CD4-positive, alpha-beta memory T cell (primary cell): ENCODE measurements at regions of chr7 and their contacts with region 1.

Region 1: GRCh38 chr7:106041140-106041717 is 70.9 kb downstream of the SYPL1 start:
- DNase-seq: peak in 2 of 5 donors; percentile 19 to 30
- H3K4me3 ChIP-seq: no peak overlapping the region
- H3K4me3 Mint-ChIP-seq: peak overlapping the region in 2 of 8 donors; percentile 6 to 59
- H3K27ac ChIP-seq: no peak overlapping the region
- H3K27ac Mint-ChIP-seq: peak overlapping the region in 4 of 7 donors; percentile 0 to 74 (median 30)
- H3K4me1 ChIP-seq: peaks cover 26% of the 10 kb centered on the region
- H3K4me1 Mint-ChIP-seq: peaks cover 15 to 32% (median 25%) of the 10 kb centered on the region in 4 donors
- H3K27me3 ChIP-seq: no peaks in the 10 kb centered on the region
- H3K27me3 Mint-ChIP-seq: peaks cover 2 to 6% of the 10 kb centered on the region in 2 donors

Region 2: GRCh38 chr7:105934572-105935185 is 106.5 kb before region 1 on chr7:
- CTCF ChIA-PET with region 1: no interaction called
- POLR2A ChIA-PET with region 1: no interaction called
- intact Hi-C with region 1: loop called (anchors 1 kb)
- DNase-seq: no peak
- H3K4me3 ChIP-seq: no peak overlapping the region
- H3K4me3 Mint-ChIP-seq: no peak overlapping the region
- H3K27ac ChIP-seq: no peak overlapping the region
- H3K27ac Mint-ChIP-seq: no peak overlapping the region
- H3K4me1 ChIP-seq: no peaks in the 10 kb centered on the region
- H3K4me1 Mint-ChIP-seq: peaks cover 0 to 8% (median 6%) of the 10 kb centered on the region in 4 donors
- H3K27me3 ChIP-seq: no peaks in the 10 kb centered on the region
- H3K27me3 Mint-ChIP-seq: no peaks in the 10 kb centered on the region

Region 3: DNA sequence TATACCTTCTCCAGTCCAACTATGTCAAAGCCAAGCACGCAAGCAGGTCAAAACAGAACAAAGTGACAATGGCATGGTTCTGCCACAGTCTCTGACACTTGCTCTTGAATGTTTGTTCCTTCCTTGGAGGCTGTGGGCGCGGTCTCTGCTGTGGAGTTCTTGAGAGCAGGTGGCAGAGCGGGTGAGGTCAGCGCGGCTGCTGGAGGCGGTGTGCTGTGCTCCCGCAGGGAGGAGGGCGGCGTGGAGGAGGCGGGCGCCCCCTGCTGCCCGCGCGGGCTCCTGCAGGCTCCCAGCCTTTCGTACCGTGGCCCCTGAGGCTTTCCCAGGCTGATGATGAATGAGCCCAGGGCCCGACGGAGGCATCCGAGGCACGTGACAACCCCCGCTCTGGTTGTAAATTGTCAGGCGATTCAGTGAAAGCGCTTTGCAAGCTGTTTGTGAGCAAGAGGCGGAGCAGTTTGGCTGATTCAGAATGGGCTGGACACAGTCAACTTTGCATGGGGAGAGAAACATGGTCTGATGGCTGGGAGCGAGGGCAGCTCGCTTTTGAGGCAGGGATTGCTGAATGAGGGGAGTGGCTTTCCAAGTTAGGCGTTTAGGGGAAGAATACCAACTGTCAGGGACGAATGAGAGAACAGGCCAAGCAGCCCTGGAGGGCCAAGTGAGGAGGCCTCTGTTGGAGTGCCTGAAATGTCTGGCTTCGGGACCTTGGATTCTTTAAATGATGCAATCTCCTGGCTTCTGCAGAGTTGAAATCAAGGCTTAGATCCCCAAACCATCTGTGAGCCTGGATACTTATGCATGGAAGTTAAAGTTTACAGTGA is 31.6 kb before region 1 on chr7:
- CTCF ChIA-PET with region 1: interaction called, 16 read pairs
- POLR2A ChIA-PET with region 1: no interaction called
- intact Hi-C with region 1: loop called (anchors 1 kb)
- DNase-seq: peak; percentile 77 to 83 (median 78)
- H3K4me3 ChIP-seq: no peak overlapping the region
- H3K4me3 Mint-ChIP-seq: peak overlapping the region in 4 of 8 donors; percentile 34 to 64 (median 48)
- H3K27ac ChIP-seq: no peak overlapping the region
- H3K27ac Mint-ChIP-seq: peak overlapping the region in 6 of 7 donors; percentile 64 to 85 (median 74)
- H3K4me1 ChIP-seq: peaks cover 23% of the 10 kb centered on the region
- H3K4me1 Mint-ChIP-seq: peaks cover 18 to 28% (median 24%) of the 10 kb centered on the region in 4 donors
- H3K27me3 ChIP-seq: no peaks in the 10 kb centered on the region
- H3K27me3 Mint-ChIP-seq: no peaks in the 10 kb centered on the region

Region 4: GRCh38 chr7:106015381-106016218 is 25.6 kb before region 1 on chr7:
- CTCF ChIA-PET with region 1: interaction called, 109 read pairs
- POLR2A ChIA-PET with region 1: no interaction called
- intact Hi-C with region 1: no loop called
- DNase-seq: no peak
- H3K4me3 ChIP-seq: no peak overlapping the region
- H3K4me3 Mint-ChIP-seq: no peak overlapping the region
- H3K27ac ChIP-seq: no peak overlapping the region
- H3K27ac Mint-ChIP-seq: peak overlapping the region in 1 of 7 donors; percentile 63
- H3K4me1 ChIP-seq: peaks cover 30% of the 10 kb centered on the region
- H3K4me1 Mint-ChIP-seq: peaks cover 17 to 38% (median 24%) of the 10 kb centered on the region in 4 donors
- H3K27me3 ChIP-seq: no peaks in the 10 kb centered on the region
- H3K27me3 Mint-ChIP-seq: no peaks in the 10 kb centered on the region